Activated CD4-positive, alpha-beta memory T cell treated with anti-CD3 and anti-CD28 coated beads for 36 hours (primary cell): ENCODE measurements at regions of chr9 and their contacts with region 1.

Region 1: GRCh38 chr9:5375091-5375490 is 35.4 kb upstream of the RLN1 start:
- DNase-seq: peak; percentile 76
- H3K4me3 Mint-ChIP-seq: no peak overlapping the region
- H3K27ac Mint-ChIP-seq: peak overlapping the region; percentile 59
- H3K4me1 Mint-ChIP-seq: peaks cover 31% of the 10 kb centered on the region
- H3K27me3 Mint-ChIP-seq: no peaks in the 10 kb centered on the region

Region 2: GRCh38 chr9:4904322-4905134 is 470.6 kb before region 1 on chr9:
- CTCF ChIA-PET with region 1: no interaction called
- POLR2A ChIA-PET with region 1: no interaction called
- intact Hi-C with region 1: no loop called
- DNase-seq: no peak
- H3K4me3 Mint-ChIP-seq: no peak overlapping the region
- H3K27ac Mint-ChIP-seq: no peak overlapping the region
- H3K4me1 Mint-ChIP-seq: no peaks in the 10 kb centered on the region
- H3K27me3 Mint-ChIP-seq: no peaks in the 10 kb centered on the region

Region 3: GRCh38 chr9:4923580-4924544 is 451.2 kb before region 1 on chr9:
- CTCF ChIA-PET with region 1: no interaction called
- POLR2A ChIA-PET with region 1: no interaction called
- intact Hi-C with region 1: loop called (anchors 10 kb)
- DNase-seq: no peak
- H3K4me3 Mint-ChIP-seq: no peak overlapping the region
- H3K27ac Mint-ChIP-seq: no peak overlapping the region
- H3K4me1 Mint-ChIP-seq: peaks cover 22% of the 10 kb centered on the region
- H3K27me3 Mint-ChIP-seq: no peaks in the 10 kb centered on the region

Region 4: DNA sequence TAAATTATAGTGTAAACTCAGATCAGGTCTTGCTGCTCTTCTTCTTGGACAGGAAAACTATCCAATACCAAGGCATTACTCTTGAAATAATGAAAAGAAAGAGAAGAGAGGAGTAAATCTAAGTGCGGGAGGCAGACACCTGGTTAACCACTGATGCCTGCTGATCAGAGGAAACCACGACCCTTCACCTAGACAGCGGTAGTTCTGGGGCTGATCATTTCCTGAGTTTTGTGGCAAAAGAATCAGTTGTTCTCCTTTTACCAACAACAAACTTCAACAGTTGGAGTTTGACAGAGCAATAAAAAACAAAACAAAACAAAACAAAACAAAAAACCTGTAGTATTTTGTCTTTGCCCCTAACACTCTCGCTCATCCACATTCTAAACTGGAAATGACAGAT is 38.4 kb before region 1 on chr9:
- CTCF ChIA-PET with region 1: no interaction called
- POLR2A ChIA-PET with region 1: no interaction called
- intact Hi-C with region 1: loop called (anchors 2 kb)
- DNase-seq: peak; percentile 41
- H3K4me3 Mint-ChIP-seq: peak overlapping the region; percentile 37
- H3K27ac Mint-ChIP-seq: peak overlapping the region; percentile 69
- H3K4me1 Mint-ChIP-seq: peaks cover 41% of the 10 kb centered on the region
- H3K27me3 Mint-ChIP-seq: no peaks in the 10 kb centered on the region

Region 5: DNA sequence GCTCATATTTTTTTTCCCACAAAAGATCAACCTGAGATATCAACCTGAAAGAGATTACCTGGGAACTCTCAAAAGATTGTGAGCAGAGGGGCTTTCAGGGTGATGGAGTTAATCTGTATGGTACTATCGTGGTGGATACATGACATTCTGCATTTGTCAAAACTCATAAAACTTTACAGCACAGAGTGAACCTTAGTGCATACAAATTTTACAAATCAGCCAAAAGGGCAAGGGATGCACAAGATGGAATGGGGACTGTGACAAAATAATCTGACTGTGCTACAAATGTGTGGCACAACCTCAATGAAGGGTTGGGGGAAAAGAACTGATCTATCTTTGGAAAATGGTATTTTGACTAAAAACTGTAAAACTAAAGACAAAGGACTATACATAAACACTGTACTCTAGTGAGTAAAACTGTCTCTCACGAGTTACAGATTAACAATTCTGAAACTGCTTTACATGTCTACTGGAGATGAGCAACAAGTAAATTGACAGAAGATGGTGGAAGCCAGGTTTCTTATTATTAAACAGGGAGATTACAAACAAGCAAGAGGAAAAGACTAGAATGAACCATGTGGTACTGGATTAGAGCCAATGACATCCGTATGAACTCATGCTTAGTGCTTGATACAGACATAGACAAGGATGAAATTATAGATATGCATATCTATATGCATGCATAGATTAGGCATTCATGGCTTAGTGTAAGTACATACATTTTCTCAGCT is 10.6 kb before region 1 on chr9:
- CTCF ChIA-PET with region 1: interaction called, 3 read pairs
- POLR2A ChIA-PET with region 1: interaction called, 3 read pairs
- intact Hi-C with region 1: loop called (anchors 1 kb)
- DNase-seq: no peak
- H3K4me3 Mint-ChIP-seq: no peak overlapping the region
- H3K27ac Mint-ChIP-seq: peak overlapping the region; percentile 59
- H3K4me1 Mint-ChIP-seq: peaks cover 21% of the 10 kb centered on the region
- H3K27me3 Mint-ChIP-seq: no peaks in the 10 kb centered on the region